Right ventricle myocardium inferior (tissue), 1 donor: ENCODE measurements at regions of chr4 and their contacts with region 1.

Region 1: DNA sequence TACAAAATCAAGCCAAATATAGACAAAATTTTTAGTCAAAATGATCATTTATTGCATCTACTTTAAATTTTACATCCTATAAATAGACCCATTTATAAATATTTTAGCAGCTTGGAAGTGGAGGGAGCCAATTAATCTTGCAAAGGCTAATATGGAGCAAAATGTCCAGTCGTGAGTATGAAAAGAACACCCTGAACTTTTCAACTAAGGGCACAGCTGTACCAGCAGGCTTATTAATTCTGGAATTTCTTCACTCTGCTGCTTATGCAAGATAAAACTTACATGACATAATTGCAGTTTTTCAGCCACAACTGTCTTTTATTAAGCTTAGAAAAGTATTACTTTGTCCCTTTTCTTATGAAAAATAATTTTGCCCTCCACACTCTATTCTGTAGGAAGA is 22.9 kb upstream of the USP53 start:
- DNase-seq: no peak
- ATAC-seq: peak; percentile 90

Region 2: GRCh38 chr4:119204916-119205315 is 15.3 kb after region 1 on chr4:
- intact Hi-C with region 1: loop called (anchors 2 kb)
- DNase-seq: no peak
- ATAC-seq: no peak